ENCODE measurements at regions of chr12 and their contacts with region 1.

Region 1: GRCh38 chr12:56359851-56360767 is at the start of gene STAT2:
- DNase-seq: peak; percentile 99 to 100
- H3K4me3 ChIP-seq: peak within 1 kb of the TSS in 2 of 3 donors; percentile 48 to 92
- H3K27ac ChIP-seq: peak within 1 kb of the TSS; percentile 90 to 96 (median 92)
- H3K4me1 ChIP-seq: peaks cover 14 to 21% of the 10 kb centered on the region in 2 donors
- H3K27me3 ChIP-seq: no peaks in the 10 kb centered on the region
- CTCF ChIP-seq: no peak
- POLR2A ChIP-seq: peak in 1 of 2 donors; percentile 81
- total RNA-seq, gene STAT2: 121 to 166 (median 146) TPM

Region 2: GRCh38 chr12:56450241-56450640 is 90.1 kb after region 1 on chr12:
- intact Hi-C with region 1: loop called (anchors 10 kb)
- DNase-seq: no peak
- H3K4me3 ChIP-seq: no peak overlapping the region
- H3K27ac ChIP-seq: no peak overlapping the region
- H3K4me1 ChIP-seq: peaks cover 3 to 10% of the 10 kb centered on the region in 2 donors
- H3K27me3 ChIP-seq: no peaks in the 10 kb centered on the region
- CTCF ChIP-seq: no peak
- POLR2A ChIP-seq: no peak